ENCODE measurements at regions of chr1 and their contacts with region 1.

Region 1: GRCh38 chr1:24923485-24924113 is 6.5 kb downstream of the RUNX3 start:
- DNase-seq: no peak
- H3K4me3 Mint-ChIP-seq: peak overlapping the region; percentile 45
- H3K27ac Mint-ChIP-seq: peak overlapping the region; percentile 71
- H3K4me1 Mint-ChIP-seq: peaks cover 78% of the 10 kb centered on the region
- H3K27me3 Mint-ChIP-seq: peaks cover 2% of the 10 kb centered on the region

Region 2: GRCh38 chr1:24910751-24911650 is 12.6 kb before region 1 on chr1:
- intact Hi-C with region 1: loop called (anchors 2 kb)
- DNase-seq: peak; percentile 51
- H3K4me3 Mint-ChIP-seq: no peak overlapping the region
- H3K27ac Mint-ChIP-seq: peak overlapping the region; percentile 83
- H3K4me1 Mint-ChIP-seq: peaks cover 33% of the 10 kb centered on the region
- H3K27me3 Mint-ChIP-seq: no peaks in the 10 kb centered on the region

Region 3: GRCh38 chr1:25031966-25032667 is 108.5 kb after region 1 on chr1:
- intact Hi-C with region 1: loop called (anchors 1 kb)
- DNase-seq: no peak
- H3K4me3 Mint-ChIP-seq: peak overlapping the region; percentile 88
- H3K27ac Mint-ChIP-seq: peak overlapping the region; percentile 99
- H3K4me1 Mint-ChIP-seq: peaks cover 68% of the 10 kb centered on the region
- H3K27me3 Mint-ChIP-seq: peaks cover 2% of the 10 kb centered on the region

Region 4: GRCh38 chr1:25065795-25066238 is 142.2 kb after region 1 on chr1:
- intact Hi-C with region 1: loop called (anchors 1 kb)
- DNase-seq: no peak
- H3K4me3 Mint-ChIP-seq: no peak overlapping the region
- H3K27ac Mint-ChIP-seq: no peak overlapping the region
- H3K4me1 Mint-ChIP-seq: peaks cover 25% of the 10 kb centered on the region
- H3K27me3 Mint-ChIP-seq: peaks cover 23% of the 10 kb centered on the region

Region 5: DNA sequence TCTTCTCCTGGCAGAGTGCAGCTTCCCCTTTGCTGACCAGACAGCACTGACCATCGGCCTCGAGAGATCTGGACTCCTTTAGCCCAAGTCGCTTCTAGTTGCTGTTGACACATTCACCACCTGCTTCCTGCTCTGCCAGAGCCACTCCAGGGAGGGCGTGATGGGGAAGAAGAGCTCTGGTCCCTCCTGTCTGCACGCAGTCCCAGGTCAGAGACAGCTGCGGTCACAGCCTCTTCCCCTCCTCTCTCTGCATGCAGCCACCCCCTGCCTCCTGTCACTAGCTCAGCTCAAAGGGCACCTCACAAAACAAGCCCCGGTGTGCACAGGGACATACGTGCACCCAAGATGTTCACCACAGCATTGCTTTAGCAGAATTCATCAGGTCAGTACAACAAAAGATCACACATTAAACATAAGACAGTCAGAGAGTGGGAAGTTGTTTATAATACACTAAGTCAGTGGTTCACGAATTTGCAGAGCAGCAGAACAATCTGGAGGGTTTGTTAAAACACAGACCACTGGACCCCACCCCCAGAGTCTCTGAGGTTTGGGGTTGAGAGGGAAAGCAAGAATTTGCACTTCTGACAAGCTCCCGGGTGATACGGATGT is 175.8 kb after region 1 on chr1:
- intact Hi-C with region 1: loop called (anchors 1 kb)
- DNase-seq: peak; percentile 37
- H3K4me3 Mint-ChIP-seq: peak overlapping the region; percentile 68
- H3K27ac Mint-ChIP-seq: peak overlapping the region; percentile 88
- H3K4me1 Mint-ChIP-seq: peaks cover 84% of the 10 kb centered on the region
- H3K27me3 Mint-ChIP-seq: peaks cover 2% of the 10 kb centered on the region

Region 6: DNA sequence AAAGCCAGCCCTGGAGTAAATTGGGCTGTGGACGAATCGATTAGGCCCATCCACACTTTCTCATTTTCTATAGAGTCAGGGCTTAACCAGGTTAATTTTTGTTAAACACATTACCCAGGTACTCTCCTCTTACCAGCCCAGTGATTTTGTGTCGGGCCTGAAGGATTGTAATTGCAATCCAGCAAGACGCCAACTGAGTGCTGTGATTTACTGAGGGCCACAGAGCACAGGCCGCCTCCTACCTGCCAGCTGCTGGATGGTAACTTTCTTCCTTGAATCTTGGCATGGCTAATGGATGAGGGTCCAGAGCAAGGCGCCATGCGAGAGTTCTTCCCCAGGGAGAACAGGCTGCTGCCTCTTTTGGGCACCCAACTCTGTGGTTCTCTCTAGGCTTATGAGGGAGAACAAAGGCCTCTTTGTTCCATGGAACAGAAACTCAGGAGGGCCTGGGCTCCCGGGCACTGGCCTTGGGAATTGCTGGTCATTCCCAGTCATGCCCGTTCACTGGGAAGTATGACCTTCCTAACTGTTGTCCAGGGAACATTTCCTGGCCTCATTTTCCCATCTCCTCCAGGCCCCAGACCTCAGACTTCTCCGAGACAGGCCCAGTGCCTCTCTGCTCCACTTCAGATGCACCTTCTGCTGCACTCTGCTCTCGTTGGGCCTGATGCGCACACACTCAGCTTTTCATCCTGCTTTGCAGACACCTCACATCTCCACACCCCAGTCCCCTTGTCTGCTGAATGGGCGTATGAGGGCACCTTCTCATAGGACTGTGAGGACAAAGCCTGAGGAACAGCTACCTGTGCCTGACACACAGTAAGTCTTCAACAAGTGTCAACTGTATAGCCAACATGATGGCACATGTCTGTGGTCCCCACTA is 251.4 kb after region 1 on chr1:
- intact Hi-C with region 1: no loop called
- DNase-seq: no peak
- H3K4me3 Mint-ChIP-seq: no peak overlapping the region
- H3K27ac Mint-ChIP-seq: no peak overlapping the region
- H3K4me1 Mint-ChIP-seq: no peaks in the 10 kb centered on the region
- H3K27me3 Mint-ChIP-seq: peaks cover 11% of the 10 kb centered on the region